Mammary epithelial cell (primary cell): ENCODE measurements at regions of chr16 and their contacts with region 1.

Region 1: GRCh38 chr16:57300387-57301125 is 16.1 kb upstream of the PLLP start:
- DNase-seq: peak; percentile 97
- H3K4me3 ChIP-seq: peak overlapping the region; percentile 25 to 47 (median 40)
- H3K27ac ChIP-seq: no peak overlapping the region
- H3K4me1 ChIP-seq: peaks cover 10% of the 10 kb centered on the region
- H3K27me3 ChIP-seq: no peaks in the 10 kb centered on the region
- CTCF ChIP-seq: peak; percentile 97 to 99

Region 2: GRCh38 chr16:57084257-57084770 is 216.2 kb before region 1 on chr16:
- CTCF ChIA-PET with region 1: no interaction called
- dilution Hi-C with region 1: no loop called
- in situ Hi-C with region 1: loop called in 1 of 2 experiments (anchors 10 kb)
- intact Hi-C with region 1: loop called (anchors 1 kb)
- DNase-seq: peak; percentile 36
- H3K4me3 ChIP-seq: no peak overlapping the region
- H3K27ac ChIP-seq: no peak overlapping the region
- H3K4me1 ChIP-seq: no peaks in the 10 kb centered on the region
- H3K27me3 ChIP-seq: no peaks in the 10 kb centered on the region
- CTCF ChIP-seq: peak; percentile 97 to 99

Region 3: GRCh38 chr16:57260294-57260929 is 40.1 kb before region 1 on chr16:
- CTCF ChIA-PET with region 1: no interaction called
- dilution Hi-C with region 1: loop called (anchors 5 kb)
- in situ Hi-C with region 1: no loop called
- intact Hi-C with region 1: loop called (anchors 2 kb)
- DNase-seq: peak; percentile 84
- H3K4me3 ChIP-seq: no peak overlapping the region
- H3K27ac ChIP-seq: peak overlapping the region; percentile 54
- H3K4me1 ChIP-seq: peaks cover 47% of the 10 kb centered on the region
- H3K27me3 ChIP-seq: no peaks in the 10 kb centered on the region
- CTCF ChIP-seq: no peak

Region 4: GRCh38 chr16:57349212-57350031 is 48.9 kb after region 1 on chr16:
- CTCF ChIA-PET with region 1: no interaction called
- dilution Hi-C with region 1: loop called (anchors 10 kb)
- in situ Hi-C with region 1: no loop called
- intact Hi-C with region 1: no loop called
- DNase-seq: no peak
- H3K4me3 ChIP-seq: no peak overlapping the region
- H3K27ac ChIP-seq: no peak overlapping the region
- H3K4me1 ChIP-seq: no peaks in the 10 kb centered on the region
- H3K27me3 ChIP-seq: peaks cover 3% of the 10 kb centered on the region
- CTCF ChIP-seq: no peak

Region 5: DNA sequence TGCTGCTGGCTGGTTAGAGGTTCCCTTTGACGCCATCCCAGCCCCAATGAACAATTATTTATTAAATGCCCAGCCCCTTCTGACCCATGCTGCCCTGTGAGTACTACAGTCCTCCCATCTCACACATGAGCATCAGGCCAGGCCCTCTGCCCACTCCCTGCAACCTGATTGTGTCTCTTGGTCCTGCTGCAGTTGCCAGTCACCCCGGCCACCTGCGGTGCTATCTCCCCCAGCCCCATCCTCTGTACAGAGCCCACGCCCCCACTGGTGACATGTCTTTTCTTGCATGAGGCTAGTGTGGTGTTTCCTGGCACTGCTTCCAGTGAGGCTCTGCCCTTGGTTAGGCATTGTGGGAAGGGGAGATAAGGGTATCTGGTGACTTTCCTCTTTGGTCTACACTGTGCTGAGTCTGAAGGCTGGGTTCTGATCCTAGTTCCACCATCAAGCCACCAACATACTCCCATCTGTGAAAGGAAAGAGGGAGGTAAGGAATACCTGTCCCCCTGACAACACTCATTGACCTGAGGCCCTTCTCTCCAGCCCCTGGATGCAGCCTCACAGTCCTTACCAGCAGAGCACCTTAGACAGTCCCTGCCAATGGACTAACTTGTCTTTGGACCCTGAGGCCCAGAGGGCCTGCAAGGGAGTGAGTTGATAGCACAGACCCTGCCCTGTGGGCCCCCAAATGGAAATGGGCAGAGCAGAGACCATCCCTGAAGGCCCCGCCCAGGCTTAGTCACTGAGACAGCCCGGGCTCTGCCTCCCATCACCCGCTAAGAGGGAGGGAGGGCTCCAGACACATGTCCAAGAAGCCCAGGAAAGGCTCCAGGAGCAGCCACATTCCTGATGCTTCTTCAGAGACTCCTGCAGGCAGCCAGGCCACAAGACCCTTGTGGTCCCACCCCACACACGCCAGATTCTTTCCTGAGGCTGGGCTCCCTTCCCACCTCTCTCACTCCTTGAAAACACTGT is 83.0 kb after region 1 on chr16:
- CTCF ChIA-PET with region 1: no interaction called
- dilution Hi-C with region 1: no loop called
- in situ Hi-C with region 1: no loop called
- intact Hi-C with region 1: no loop called
- DNase-seq: no peak
- H3K4me3 ChIP-seq: no peak overlapping the region
- H3K27ac ChIP-seq: no peak overlapping the region
- H3K4me1 ChIP-seq: peaks cover 20% of the 10 kb centered on the region
- H3K27me3 ChIP-seq: no peaks in the 10 kb centered on the region
- CTCF ChIP-seq: no peak

Region 6: DNA sequence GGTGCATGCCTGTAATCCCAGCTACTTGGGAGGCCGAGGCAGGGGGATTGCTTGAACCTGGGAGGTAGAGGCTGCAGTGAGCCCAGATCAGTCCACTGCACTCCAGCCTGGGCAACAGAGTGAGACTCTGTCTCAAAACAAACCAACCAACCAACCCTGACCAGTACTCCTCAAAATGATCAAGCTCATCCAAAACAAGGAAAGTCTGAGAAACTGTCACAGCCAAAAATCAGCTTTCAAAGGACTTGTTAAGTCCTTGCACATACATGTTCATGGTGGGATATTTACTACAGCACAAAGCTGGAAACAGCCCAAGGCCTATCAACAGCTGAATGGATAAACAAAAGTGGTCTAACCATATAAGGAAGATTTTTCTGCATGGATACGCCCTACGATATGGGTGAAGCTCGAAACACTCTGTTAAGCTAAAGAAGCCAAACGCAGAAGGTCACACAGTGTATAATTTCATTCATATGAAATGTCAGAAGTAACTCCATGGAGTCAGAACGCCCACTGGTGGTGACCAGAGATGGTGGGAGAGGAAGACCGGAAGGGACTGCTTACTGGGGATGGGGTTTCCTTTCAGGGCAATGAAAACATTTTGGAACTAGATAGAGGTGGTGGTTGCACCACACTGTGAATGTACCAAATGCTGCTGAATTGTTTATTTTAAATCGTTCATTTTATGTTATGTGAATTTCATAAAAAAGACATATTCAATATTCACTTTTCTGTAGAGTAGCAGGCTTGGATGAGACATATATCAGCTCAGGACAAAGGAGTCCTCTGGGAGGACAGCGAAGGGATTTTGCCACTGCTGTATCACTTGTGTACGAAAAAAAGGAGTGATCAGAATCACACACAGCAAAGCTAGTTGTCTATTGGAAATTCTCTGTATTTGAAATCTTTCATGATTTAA is 121.7 kb after region 1 on chr16:
- CTCF ChIA-PET with region 1: interaction called, 21 read pairs
- dilution Hi-C with region 1: loop called (anchors 5 kb)
- in situ Hi-C with region 1: loop called (anchors 5 kb)
- intact Hi-C with region 1: loop called (anchors 1 kb)
- DNase-seq: peak; percentile 33
- H3K4me3 ChIP-seq: no peak overlapping the region
- H3K27ac ChIP-seq: no peak overlapping the region
- H3K4me1 ChIP-seq: peaks cover 12% of the 10 kb centered on the region
- H3K27me3 ChIP-seq: no peaks in the 10 kb centered on the region
- CTCF ChIP-seq: peak; percentile 69

Region 7: DNA sequence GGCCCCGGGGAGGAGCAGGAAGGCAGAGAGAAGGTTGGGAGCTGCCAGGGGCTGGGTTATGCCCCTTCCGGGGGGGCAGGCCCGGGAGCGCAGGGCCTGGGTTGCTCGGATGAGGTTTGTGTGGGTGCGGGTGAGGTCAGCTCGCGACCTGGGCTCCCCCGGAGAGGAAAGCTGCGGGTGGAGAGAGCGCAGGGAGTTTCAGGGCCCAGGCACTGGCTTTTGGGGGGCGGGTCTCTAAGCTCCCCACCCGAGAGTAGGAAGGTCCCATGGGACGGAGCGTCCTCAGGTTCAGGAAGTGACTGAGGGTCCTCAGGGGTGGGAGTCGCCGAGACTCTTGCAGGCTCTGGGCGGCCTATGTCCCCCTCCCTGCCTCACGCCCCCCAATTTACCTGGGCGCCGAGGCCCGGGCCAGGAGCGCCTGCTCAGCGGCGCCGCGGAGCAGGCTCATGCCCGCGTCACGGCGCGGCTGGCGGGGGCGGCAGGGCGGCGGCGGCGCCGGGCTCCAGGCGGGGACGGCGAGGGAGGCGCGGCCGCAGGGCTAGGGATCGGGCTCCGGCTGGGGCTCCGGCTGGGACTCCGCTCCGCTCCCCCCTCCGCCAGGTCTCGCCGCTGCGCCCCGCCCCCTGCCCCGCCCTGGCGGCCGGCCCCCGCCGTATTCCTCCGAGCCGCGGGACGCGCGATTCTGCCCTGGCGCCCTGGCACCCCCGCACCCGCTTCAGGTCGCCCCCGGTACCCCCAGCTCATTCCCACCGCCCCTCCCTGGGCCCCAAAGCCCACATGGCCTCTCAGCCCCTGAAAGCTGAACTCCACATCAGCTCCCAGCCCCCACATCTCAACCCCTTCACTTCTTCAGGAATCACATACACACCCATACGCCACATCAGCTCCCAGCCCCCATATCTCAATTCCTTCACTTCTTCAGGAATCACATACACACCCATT is 185.6 kb after region 1 on chr16 and contains the start of gene DOK4:
- CTCF ChIA-PET with region 1: no interaction called
- dilution Hi-C with region 1: no loop called
- in situ Hi-C with region 1: no loop called
- intact Hi-C with region 1: loop called (anchors 1 kb)
- DNase-seq: peak; percentile 74
- H3K4me3 ChIP-seq: peak within 1 kb of the TSS; percentile 71 to 81 (median 76)
- H3K27ac ChIP-seq: peak within 1 kb of the TSS; percentile 57
- H3K4me1 ChIP-seq: peaks cover 11% of the 10 kb centered on the region
- H3K27me3 ChIP-seq: no peaks in the 10 kb centered on the region
- CTCF ChIP-seq: no peak
- total RNA-seq, gene DOK4: 14.8 to 20.0 TPM